A549 (cell line): ENCODE measurements at regions of chr14 and their contacts with region 1.

Region 1: DNA sequence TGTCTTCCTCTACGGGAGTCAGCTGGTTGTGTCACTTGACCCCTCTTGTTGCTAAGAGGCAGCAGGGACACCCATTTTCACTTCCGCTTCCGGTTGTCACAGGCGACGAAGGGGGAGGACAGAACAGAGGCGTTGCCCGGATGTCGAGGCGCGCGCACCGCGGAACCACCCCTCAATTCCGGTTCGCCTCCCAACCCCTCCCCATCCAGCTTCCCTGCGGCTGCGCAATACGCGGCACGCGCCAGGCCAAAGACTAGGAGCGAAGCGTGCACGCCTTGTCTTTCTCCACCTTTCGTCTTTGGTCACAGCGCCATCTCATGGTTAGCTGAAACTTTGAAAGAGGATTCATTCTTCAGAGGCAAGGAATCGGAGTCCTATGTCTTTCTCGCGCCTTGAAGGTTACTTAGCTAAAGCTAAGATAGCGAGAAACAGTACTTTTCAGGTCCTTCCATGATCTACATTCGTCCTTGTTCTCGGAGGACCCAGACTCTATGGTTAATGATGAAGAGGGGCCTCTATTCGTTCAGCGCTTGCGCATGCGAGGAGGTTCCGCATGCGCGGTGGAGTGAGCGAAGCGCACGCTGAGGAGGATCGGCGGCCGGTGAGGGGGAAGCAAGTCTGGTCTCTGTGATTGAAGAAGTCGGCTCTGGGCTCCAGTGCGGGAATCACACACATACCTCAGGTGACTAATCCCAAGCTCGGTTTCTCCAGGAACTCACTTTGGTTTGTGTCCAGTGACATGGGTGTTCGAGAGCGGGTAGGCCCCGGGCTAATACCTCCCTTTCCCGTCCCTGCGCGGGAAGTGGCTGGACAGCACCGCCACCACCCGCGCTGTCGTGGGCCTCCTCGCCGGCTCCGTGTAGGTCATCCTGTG is at the starts of genes ATP6V1D and EIF2S1:
- DNase-seq: peak; percentile 98 to 100
- ATAC-seq: peak; percentile 95 to 97
- H3K4me3 ChIP-seq: peak within 1 kb of the TSS; percentile 87
- H3K27ac ChIP-seq: peak within 1 kb of the TSS; percentile 95 to 99
- H3K4me1 ChIP-seq: peaks cover 39% of the 10 kb centered on the region
- CTCF ChIP-seq: peak; percentile 98
- EP300 ChIP-seq: 0 out of 5 replicates have a peak, but pooled peaks of 1 of the 2 experiments have one; percentile 34
- POLR2A ChIP-seq: peak; percentile 85
- RAD21 ChIP-seq: peak in 1 of 2 experiments; percentile 26; a peak in 2 of 5 replicates
- polyA plus RNA-seq, gene ATP6V1D: 70.4 and 81.7 TPM in 2 replicates
- polyA plus RNA-seq, gene EIF2S1: 192 and 393 TPM in 2 replicates

Region 2: GRCh38 chr14:66507722-66508546 is 852.1 kb before region 1 on chr14 and contains the start of gene GPHN:
- CTCF ChIA-PET with region 1: no interaction called
- POLR2A ChIA-PET with region 1: interaction called, 11 read pairs
- DNase-seq: peak; percentile 87 to 98
- ATAC-seq: peak; percentile 94 to 98
- H3K4me3 ChIP-seq: peak within 1 kb of the TSS; percentile 76
- H3K27ac ChIP-seq: peak within 1 kb of the TSS; percentile 76 to 94
- H3K4me1 ChIP-seq: peaks cover 11% of the 10 kb centered on the region; the same call in 2 of the 3 replicates
- CTCF ChIP-seq: no peak
- EP300 ChIP-seq: no peak
- POLR2A ChIP-seq: peak; percentile 88
- RAD21 ChIP-seq: no peak; a peak in 1 of 5 replicates
- polyA plus RNA-seq, gene GPHN: 15.5 and 17.6 TPM in 2 replicates

Region 3: GRCh38 chr14:67166450-67166853 is 193.6 kb before region 1 on chr14:
- CTCF ChIA-PET with region 1: interaction called, 14 read pairs
- POLR2A ChIA-PET with region 1: no interaction called
- DNase-seq: peak in 1 of 2 experiments; percentile 64
- ATAC-seq: peak; percentile 76 to 78; a peak in 5 of 6 replicates
- H3K4me3 ChIP-seq: no peak overlapping the region
- H3K27ac ChIP-seq: peak overlapping the region in 1 of 2 experiments; percentile 25; a peak in 2 of 6 replicates
- H3K4me1 ChIP-seq: peaks cover 13% of the 10 kb centered on the region
- CTCF ChIP-seq: peak; percentile 96
- EP300 ChIP-seq: no peak
- POLR2A ChIP-seq: no peak
- RAD21 ChIP-seq: peak; percentile 97 to 98

Region 4: DNA sequence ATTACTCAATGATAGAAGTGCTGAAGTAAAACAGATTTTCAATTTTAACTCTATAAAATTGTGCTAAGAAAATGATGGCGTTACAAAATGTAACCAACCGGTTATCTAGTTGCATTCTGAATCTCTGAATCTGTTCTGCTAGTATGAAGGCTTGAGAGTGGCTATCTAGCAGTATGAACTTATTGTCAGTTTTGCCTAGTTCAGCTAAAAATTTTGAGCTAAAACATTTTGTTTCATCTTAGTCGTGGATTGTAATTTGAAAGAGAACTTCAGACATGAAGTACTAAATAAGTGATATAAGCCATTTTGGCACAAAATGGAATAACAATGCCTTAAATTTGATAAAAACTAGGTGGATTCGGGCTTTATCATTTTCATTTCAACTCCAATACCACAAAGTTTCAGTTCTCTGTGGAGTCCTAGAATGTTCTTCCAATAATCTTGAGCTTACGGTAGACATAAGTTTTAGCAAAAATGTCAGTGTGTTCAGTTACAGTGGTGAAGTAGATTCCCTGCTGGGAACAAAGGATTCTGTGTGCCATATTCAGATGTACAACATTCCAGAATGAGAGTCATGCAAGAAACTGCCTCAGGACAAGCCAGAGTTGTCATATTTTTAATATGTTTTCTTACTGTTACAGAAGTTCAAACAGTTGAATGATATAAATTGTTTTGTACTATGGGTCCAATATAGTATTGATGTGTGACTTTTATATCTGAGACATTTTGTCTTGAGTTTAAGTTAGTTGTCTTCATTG is 28.5 kb before region 1 on chr14:
- CTCF ChIA-PET with region 1: interaction called, 12 read pairs
- POLR2A ChIA-PET with region 1: no interaction called
- DNase-seq: no peak
- ATAC-seq: no peak
- H3K4me3 ChIP-seq: no peak overlapping the region
- H3K27ac ChIP-seq: no peak overlapping the region
- H3K4me1 ChIP-seq: no peaks in the 10 kb centered on the region
- CTCF ChIP-seq: no peak
- EP300 ChIP-seq: no peak
- POLR2A ChIP-seq: no peak
- RAD21 ChIP-seq: no peak

Region 5: DNA sequence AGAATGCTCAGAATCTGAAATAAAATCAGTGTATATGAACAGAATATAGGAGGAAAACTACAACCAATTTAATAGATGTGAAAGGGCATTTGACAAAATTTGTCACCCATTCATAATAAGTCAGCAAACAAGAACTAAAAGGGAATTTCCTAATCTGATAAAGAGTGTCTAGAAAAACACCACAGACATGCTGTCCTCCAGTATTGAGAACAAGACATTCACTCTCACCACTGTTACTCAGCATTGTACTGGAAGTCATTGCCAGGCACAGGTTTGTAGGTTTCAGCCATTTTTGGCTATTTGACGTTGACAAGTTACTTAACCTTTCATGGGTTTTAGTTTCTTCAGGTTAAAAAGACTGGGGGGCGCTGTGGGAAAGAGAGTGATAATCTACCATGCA is 13.3 kb after region 1 on chr14:
- CTCF ChIA-PET with region 1: interaction called, 16 read pairs
- POLR2A ChIA-PET with region 1: interaction called, 3 read pairs
- DNase-seq: no peak
- ATAC-seq: no peak
- H3K4me3 ChIP-seq: no peak overlapping the region
- H3K27ac ChIP-seq: no peak overlapping the region
- H3K4me1 ChIP-seq: 0 out of 3 replicates have a peak, but pooled peaks cover 5% of the 10 kb centered on the region
- CTCF ChIP-seq: no peak
- EP300 ChIP-seq: no peak
- POLR2A ChIP-seq: no peak
- RAD21 ChIP-seq: no peak

Region 6: DNA sequence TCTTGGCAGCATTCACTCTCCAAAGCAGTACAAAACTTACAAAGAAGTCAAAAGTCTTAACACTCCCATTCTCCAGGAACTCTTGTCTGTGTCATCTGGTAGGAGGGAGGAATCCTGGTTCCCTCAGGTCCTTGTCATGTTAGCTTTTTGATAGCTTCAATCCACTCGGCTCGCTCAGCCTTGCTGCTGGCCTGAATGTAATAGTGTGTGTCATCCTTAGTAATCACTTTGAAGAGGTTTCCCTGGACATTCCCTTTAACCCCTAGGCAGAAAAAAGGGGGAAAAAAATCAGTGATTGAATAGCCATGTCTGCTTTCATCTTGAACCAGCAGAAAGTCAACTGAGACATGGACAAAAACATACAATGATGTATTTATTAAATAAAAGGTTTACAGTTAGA is 27.2 kb after region 1 on chr14:
- CTCF ChIA-PET with region 1: interaction called, 18 read pairs
- POLR2A ChIA-PET with region 1: no interaction called
- DNase-seq: no peak
- ATAC-seq: 0 out of 6 replicates have a peak, but pooled peaks of 1 of the 2 experiments have one; percentile 13
- H3K4me3 ChIP-seq: no peak overlapping the region
- H3K27ac ChIP-seq: no peak overlapping the region
- H3K4me1 ChIP-seq: no peaks in the 10 kb centered on the region
- CTCF ChIP-seq: no peak
- EP300 ChIP-seq: no peak
- POLR2A ChIP-seq: no peak
- RAD21 ChIP-seq: no peak

Region 7: GRCh38 chr14:67457782-67458181 is 97.8 kb after region 1 on chr14:
- CTCF ChIA-PET with region 1: no interaction called
- POLR2A ChIA-PET with region 1: no interaction called
- DNase-seq: no peak
- ATAC-seq: peak; percentile 37 to 57; a peak in 3 of 6 replicates
- H3K4me3 ChIP-seq: no peak overlapping the region
- H3K27ac ChIP-seq: no peak overlapping the region
- H3K4me1 ChIP-seq: no peaks in the 10 kb centered on the region
- CTCF ChIP-seq: no peak
- EP300 ChIP-seq: no peak
- POLR2A ChIP-seq: no peak
- RAD21 ChIP-seq: no peak